ENCODE measurements at regions of chr14 and their contacts with region 1.

Region 1: DNA sequence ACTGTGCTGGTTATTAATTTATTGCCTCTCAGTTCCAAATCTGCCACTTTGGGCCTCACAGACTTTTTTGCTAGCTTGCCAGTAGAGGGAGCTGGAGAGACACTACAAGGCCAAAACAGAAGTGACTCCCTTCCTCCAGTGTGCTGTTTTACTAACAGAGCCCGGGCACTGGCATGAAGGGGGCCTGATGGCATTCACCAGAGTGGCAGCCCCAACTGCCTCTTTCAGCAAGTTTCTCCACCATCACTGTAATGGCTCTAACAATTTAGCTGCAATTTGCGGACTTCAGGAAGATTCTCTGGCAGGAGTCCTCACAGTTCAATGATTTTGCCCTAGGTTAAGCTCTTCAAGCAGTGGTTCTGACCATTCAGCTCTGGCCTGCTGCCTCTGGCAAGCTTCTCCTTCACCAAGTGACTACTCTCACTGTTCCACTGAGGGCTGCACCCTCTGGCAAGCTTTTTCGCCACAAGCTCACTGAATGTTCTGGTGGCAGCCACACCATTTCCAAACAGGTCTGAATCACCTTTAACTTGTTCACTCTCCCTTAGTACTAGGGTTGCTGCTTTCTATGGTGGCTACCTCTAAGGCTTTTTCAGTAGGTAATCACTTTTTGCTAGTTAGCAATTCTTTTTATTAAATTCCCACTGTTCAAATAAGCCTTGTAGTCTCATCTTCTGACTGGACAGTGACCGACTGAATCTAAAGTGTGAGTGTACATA is 104.9 kb downstream of the ZC3H14 start:
- DNase-seq: peak; percentile 51 to 91
- H3K4me3 ChIP-seq: no peak overlapping the region
- H3K27ac ChIP-seq: peak overlapping the region in 1 of 5 donors; percentile 1
- H3K4me1 ChIP-seq: peaks cover 0 to 11% (median 8%) of the 10 kb centered on the region in 4 donors
- H3K27me3 ChIP-seq: no peaks in the 10 kb centered on the region
- CTCF ChIP-seq: peak in 5 of 7 experiments; percentile 39 to 76 (median 60)
- EP300 ChIP-seq: no peak
- POLR2A ChIP-seq: no peak

Region 2: GRCh38 chr14:88568196-88568595 is 99.5 kb before region 1 on chr14:
- intact Hi-C with region 1: no loop called
- DNase-seq: no peak
- H3K4me3 ChIP-seq: no peak overlapping the region
- H3K27ac ChIP-seq: no peak overlapping the region
- H3K4me1 ChIP-seq: peaks cover 5 to 30% (median 16%) of the 10 kb centered on the region in 4 donors
- H3K27me3 ChIP-seq: no peaks in the 10 kb centered on the region
- CTCF ChIP-seq: no peak
- EP300 ChIP-seq: no peak
- POLR2A ChIP-seq: no peak

Region 3: DNA sequence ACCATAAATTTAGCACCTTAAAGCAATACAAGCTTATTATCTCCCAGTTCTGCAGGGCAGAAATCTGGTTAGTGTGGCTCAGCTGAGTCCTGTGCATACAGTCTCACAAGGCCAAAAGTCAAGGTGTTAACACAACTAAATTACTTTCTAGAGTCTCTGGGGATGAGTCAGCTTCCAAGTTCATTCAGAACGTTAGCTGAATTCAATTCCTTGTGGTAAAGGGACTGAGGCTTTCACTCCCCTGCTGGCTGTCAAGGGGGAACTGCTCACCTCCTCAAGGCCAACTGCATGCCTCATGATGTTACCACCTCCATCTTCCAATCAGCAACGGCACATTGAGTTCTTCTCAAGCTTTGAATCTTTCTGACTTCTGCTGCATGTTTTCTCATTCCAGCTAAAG is 97.4 kb after region 1 on chr14:
- intact Hi-C with region 1: loop called (anchors 10 kb)
- DNase-seq: no peak
- H3K4me3 ChIP-seq: no peak overlapping the region
- H3K27ac ChIP-seq: no peak overlapping the region
- H3K4me1 ChIP-seq: no peaks in the 10 kb centered on the region
- H3K27me3 ChIP-seq: no peaks in the 10 kb centered on the region
- CTCF ChIP-seq: no peak
- EP300 ChIP-seq: no peak
- POLR2A ChIP-seq: no peak

Region 4: GRCh38 chr14:88879022-88879421 is 211.3 kb after region 1 on chr14:
- intact Hi-C with region 1: loop called (anchors 10 kb)
- DNase-seq: no peak
- H3K4me3 ChIP-seq: no peak overlapping the region
- H3K27ac ChIP-seq: no peak overlapping the region
- H3K4me1 ChIP-seq: no peaks in the 10 kb centered on the region
- H3K27me3 ChIP-seq: no peaks in the 10 kb centered on the region
- CTCF ChIP-seq: no peak
- EP300 ChIP-seq: no peak
- POLR2A ChIP-seq: no peak